ENCODE measurements at regions of chr7 and their contacts with region 1.

Region 1: GRCh38 chr7:21243265-21243664 is 184.6 kb upstream of the SP4 start:
- DNase-seq: no peak
- CTCF ChIP-seq: no peak

Region 2: GRCh38 chr7:20778063-20778721 is 465.1 kb before region 1 on chr7:
- in situ Hi-C with region 1: loop called (anchors 10 kb)
- DNase-seq: peak; percentile 65
- CTCF ChIP-seq: peak; percentile 76